Posterior vena cava (tissue), 2 donors: ENCODE measurements at regions of chr12 and their contacts with region 1.

Region 1: GRCh38 chr12:111673503-111673902 is 12.3 kb downstream of the BRAP start:
- DNase-seq: no peak

Region 2: GRCh38 chr12:111546758-111547383 is 126.6 kb before region 1 on chr12:
- intact Hi-C with region 1: loop called in 1 of 2 experiments (anchors 10 kb)
- DNase-seq: no peak

Region 3: DNA sequence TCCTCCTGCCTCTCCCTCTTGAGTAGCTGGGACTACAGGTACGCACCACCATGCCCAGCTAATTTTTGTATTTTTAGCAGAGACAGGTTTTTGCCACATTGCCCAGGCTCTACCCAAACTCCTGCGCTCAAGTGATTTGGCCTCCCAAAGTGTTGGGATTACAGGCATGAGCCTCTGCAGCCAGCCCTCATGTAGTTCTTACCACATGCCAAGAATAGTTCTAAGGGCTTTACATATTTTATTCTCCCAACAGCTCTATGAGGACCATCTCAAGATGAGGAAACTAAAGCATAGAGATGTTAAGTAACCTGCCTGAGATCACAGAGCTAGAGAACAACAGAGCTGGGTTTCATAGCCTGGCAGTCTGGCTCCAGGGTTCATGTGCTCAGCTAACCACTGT is 55.3 kb after region 1 on chr12:
- intact Hi-C with region 1: no loop called
- DNase-seq: no peak